HepG2 (cell line): ENCODE measurements at regions of chr11 and their contacts with region 1.

Region 1: GRCh38 chr11:61972672-61973475 is 5.4 kb upstream of the FTH1 start:
- DNase-seq: peak; percentile 95
- ATAC-seq: peak; percentile 78
- H3K4me3 ChIP-seq: peak overlapping the region; percentile 65 to 72 (median 71)
- H3K27ac ChIP-seq: peak overlapping the region; percentile 100
- H3K4me1 ChIP-seq: peaks cover 93% of the 10 kb centered on the region
- H3K27me3 ChIP-seq: no peaks in the 10 kb centered on the region; a peak in 1 of 5 replicates
- CTCF ChIP-seq: peak; percentile 4; the same call in 1 of the 2 replicates
- EP300 ChIP-seq: peak in 1 of 2 experiments; percentile 79; a peak in 2 of 4 replicates
- POLR2A ChIP-seq: peak; percentile 80 to 94
- RAD21 ChIP-seq: peak; percentile 59

Region 2: GRCh38 chr11:61917341-61918109 is 55.3 kb before region 1 on chr11 and contains the start of gene RAB3IL1:
- CTCF ChIA-PET with region 1: no interaction called
- POLR2A ChIA-PET with region 1: no interaction called
- in situ Hi-C with region 1: no loop called
- intact Hi-C with region 1: no loop called
- DNase-seq: no peak
- ATAC-seq: peak; percentile 50
- H3K4me3 ChIP-seq: peak within 1 kb of the TSS; percentile 37 to 71 (median 38); a peak in 4 of 6 replicates
- H3K27ac ChIP-seq: no peak within 1 kb of the TSS
- H3K4me1 ChIP-seq: peaks cover 42% of the 10 kb centered on the region
- H3K27me3 ChIP-seq: peaks cover 11 to 39% of the 10 kb centered on the region in 2 experiments
- CTCF ChIP-seq: no peak
- EP300 ChIP-seq: no peak
- POLR2A ChIP-seq: no peak
- RAD21 ChIP-seq: no peak
- total RNA-seq, gene RAB3IL1: 1.2 and 1.3 TPM in 2 replicates

Region 3: DNA sequence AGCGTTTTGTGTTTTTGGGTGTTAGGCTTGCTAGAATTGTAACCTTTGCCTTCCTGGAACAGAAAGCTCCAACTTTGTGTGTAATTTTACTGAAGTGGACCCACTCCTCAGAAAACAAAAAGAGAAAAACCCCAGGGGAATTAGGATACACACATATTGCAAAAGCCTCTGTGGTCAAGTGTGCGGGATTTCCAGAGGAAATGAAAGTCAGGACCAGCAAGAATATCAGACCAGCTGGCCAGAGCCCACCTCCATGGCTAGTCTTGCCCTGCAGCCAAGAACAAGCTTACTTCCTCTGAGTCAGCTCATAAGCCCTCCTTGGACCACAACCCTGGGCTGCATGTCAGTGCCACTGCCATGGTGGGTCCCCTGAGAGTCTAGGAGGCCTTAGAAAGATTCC is 31.6 kb after region 1 on chr11:
- CTCF ChIA-PET with region 1: no interaction called
- POLR2A ChIA-PET with region 1: interaction called, 518 read pairs
- in situ Hi-C with region 1: loop called (anchors 5 kb)
- intact Hi-C with region 1: loop called (anchors 1 kb)
- DNase-seq: no peak
- ATAC-seq: no peak
- H3K4me3 ChIP-seq: no peak overlapping the region
- H3K27ac ChIP-seq: peak overlapping the region; percentile 26
- H3K4me1 ChIP-seq: peaks cover 67% of the 10 kb centered on the region
- H3K27me3 ChIP-seq: no peaks in the 10 kb centered on the region
- CTCF ChIP-seq: no peak
- EP300 ChIP-seq: no peak
- POLR2A ChIP-seq: no peak
- RAD21 ChIP-seq: no peak

Region 4: GRCh38 chr11:62025487-62026105 is 52.7 kb after region 1 on chr11:
- CTCF ChIA-PET with region 1: no interaction called
- POLR2A ChIA-PET with region 1: interaction called, 49 read pairs
- in situ Hi-C with region 1: no loop called
- intact Hi-C with region 1: loop called (anchors 1 kb)
- DNase-seq: peak; percentile 87
- ATAC-seq: peak; percentile 88
- H3K4me3 ChIP-seq: peak overlapping the region; percentile 15 to 53 (median 38); a peak in 5 of 6 replicates
- H3K27ac ChIP-seq: peak overlapping the region; percentile 66
- H3K4me1 ChIP-seq: peaks cover 47% of the 10 kb centered on the region
- H3K27me3 ChIP-seq: no peaks in the 10 kb centered on the region
- CTCF ChIP-seq: no peak
- EP300 ChIP-seq: peak; percentile 60 to 67; a peak in 3 of 4 replicates
- POLR2A ChIP-seq: no peak
- RAD21 ChIP-seq: no peak

Region 5: GRCh38 chr11:62081378-62082291 is 108.8 kb after region 1 on chr11:
- CTCF ChIA-PET with region 1: no interaction called
- POLR2A ChIA-PET with region 1: interaction called, 18 read pairs
- in situ Hi-C with region 1: no loop called
- intact Hi-C with region 1: no loop called
- DNase-seq: peak; percentile 46
- ATAC-seq: peak; percentile 71
- H3K4me3 ChIP-seq: no peak overlapping the region; a peak in 1 of 6 replicates
- H3K27ac ChIP-seq: no peak overlapping the region
- H3K4me1 ChIP-seq: peaks cover 6% of the 10 kb centered on the region; the same call in 1 of the 2 replicates
- H3K27me3 ChIP-seq: no peaks in the 10 kb centered on the region
- CTCF ChIP-seq: peak; percentile 92
- EP300 ChIP-seq: no peak
- POLR2A ChIP-seq: no peak
- RAD21 ChIP-seq: peak; percentile 89